ENCODE measurements at regions of chr1 and their contacts with region 1.

Region 1: GRCh38 chr1:208207388-208208131 is 36.6 kb downstream of the PLXNA2 start:
- DNase-seq: no peak
- ATAC-seq: no peak
- H3K4me3 ChIP-seq: no peak overlapping the region
- H3K4me1 ChIP-seq: peaks cover 42% of the 10 kb centered on the region
- CTCF ChIP-seq: no peak

Region 2: GRCh38 chr1:207968521-207969009 is 239.0 kb before region 1 on chr1:
- intact Hi-C with region 1: no loop called
- DNase-seq: no peak
- ATAC-seq: no peak
- H3K4me3 ChIP-seq: no peak overlapping the region
- H3K4me1 ChIP-seq: peaks cover 4% of the 10 kb centered on the region
- CTCF ChIP-seq: no peak

Region 3: DNA sequence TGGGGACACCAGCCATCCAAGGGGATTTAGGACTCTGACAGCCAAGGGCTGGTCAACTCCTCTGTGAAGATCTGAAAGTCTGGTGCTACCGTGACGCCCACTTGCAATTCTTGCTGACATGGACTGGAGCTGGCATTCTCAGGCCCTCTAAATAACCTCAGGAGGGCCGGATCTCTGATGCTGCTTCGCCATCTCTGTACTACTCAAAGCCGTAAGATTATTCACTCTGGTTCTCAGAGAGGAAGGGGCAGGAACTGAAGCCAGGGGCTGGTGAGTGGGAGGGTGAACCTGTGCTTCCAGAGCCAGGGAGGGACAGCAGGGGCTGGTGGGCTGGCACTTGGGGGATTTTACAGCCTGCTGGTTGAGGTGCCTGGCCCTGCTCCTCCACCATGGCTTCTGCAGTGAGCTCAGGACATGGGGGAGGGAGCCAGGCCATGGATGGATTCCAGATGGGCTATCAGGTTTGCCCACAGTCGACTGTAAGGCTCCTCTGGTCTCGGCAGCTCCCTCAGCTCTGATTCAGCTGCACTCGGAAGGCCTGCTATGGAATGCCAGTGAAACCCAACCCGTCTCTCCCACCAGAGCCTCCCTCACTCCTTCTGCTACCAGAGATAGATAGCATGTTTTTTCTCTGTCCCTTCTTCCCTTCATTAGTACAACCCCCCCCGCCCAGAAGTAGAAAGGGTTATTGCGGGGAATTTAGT is 47.9 kb before region 1 on chr1:
- intact Hi-C with region 1: loop called in 1 of 2 experiments (anchors 10 kb)
- DNase-seq: no peak
- ATAC-seq: no peak
- H3K4me3 ChIP-seq: no peak overlapping the region
- H3K4me1 ChIP-seq: peaks cover 28% of the 10 kb centered on the region
- CTCF ChIP-seq: no peak

Measured in mucosa of descending colon (tissue), 3 donors.